Testis (tissue), 5 donors: ENCODE measurements at regions of chr3 and their contacts with region 1.

Region 1: GRCh38 chr3:177197041-177197727 is at the start of gene TBL1XR1:
- DNase-seq: peak; percentile 93
- H3K4me3 ChIP-seq: peak within 1 kb of the TSS; percentile 87 to 91
- H3K27ac ChIP-seq: peak within 1 kb of the TSS; percentile 88 to 98
- H3K4me1 ChIP-seq: peaks cover 23% of the 10 kb centered on the region
- H3K27me3 ChIP-seq: no peaks in the 10 kb centered on the region
- CTCF ChIP-seq: no peak
- POLR2A ChIP-seq: no peak
- total RNA-seq, gene TBL1XR1: 59.8 to 67.6 TPM

Region 2: DNA sequence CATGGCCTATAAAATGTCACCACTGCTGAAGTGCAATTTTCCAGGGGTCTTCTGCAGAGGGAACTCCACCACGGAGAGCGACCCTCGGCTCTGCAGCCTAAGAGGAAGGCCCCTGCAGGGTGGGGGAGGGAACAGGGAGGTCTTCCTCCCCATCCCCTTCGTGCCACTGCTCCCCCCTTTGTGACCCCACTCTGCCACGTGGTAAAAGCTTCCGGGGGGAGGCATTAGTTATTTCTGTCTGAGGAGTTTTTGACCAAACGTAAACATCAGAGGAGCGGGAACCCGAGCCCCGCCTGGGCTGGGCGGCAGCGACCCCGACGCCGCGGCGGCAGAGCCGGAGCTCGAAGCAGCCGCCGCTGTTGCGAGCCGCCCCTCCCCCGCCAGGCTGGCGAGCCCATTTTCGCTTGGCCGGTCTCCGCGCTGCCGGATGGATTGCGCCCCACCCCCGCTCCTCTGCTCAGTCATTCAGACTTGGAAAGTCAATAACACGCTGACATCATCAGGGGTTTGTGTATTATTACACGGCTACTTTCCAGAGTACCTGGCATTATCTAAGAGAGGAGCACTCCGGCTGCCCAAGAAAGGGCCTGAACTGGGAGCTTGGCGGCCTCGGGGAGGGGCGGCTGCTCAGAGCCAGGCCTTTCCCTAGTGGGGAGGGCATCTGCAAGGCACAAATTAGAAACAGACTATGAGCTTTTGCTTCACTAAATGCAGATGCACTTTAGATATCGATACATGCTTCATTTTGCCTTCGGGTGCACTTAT is 162.6 kb after region 1 on chr3:
- intact Hi-C with region 1: loop called (anchors 2 kb)
- DNase-seq: peak; percentile 95
- H3K4me3 ChIP-seq: peak overlapping the region; percentile 45 to 49
- H3K27ac ChIP-seq: peak overlapping the region; percentile 78
- H3K4me1 ChIP-seq: peaks cover 56% of the 10 kb centered on the region
- H3K27me3 ChIP-seq: no peaks in the 10 kb centered on the region
- CTCF ChIP-seq: peak in 2 of 3 experiments; percentile 10 to 22
- POLR2A ChIP-seq: no peak

Region 3: DNA sequence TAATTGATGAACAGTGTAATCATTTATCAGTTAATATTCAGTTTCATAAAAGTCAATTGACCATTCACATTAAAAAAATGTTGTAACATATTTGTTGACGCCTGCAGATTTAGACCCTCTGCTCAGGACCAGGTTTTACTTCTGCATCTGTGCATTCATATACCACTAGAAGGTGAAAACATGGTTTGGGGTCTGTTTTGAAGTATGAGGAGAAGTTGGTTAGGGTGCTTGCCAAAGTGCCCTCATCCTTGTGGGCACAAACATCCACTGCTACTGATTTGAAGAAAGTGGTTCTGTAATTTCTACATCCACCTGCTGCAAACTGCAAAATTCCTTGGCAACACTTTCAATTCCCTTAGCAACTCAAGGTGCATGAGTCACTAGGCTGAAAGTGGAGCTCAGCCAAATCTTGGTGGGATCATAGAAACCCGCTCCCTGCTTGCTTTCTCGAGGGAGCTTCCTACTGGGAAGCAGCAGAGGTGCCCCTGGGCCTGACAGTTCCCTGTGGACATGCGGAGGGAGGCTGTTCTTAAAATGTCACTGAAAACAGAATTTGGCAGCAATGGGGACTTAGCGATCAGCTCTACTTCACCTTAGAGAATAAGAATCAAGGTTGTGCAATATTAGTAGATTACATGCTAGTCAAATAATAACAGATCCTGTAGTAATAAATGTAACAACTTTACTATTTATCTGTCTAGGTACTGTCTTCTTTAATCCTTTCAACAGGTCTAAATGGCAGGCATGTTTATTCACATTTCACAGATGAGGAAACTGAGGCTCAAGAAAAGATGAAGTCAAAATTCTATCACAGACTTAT is 301.1 kb after region 1 on chr3:
- intact Hi-C with region 1: no loop called
- DNase-seq: no peak
- H3K4me3 ChIP-seq: no peak overlapping the region
- H3K27ac ChIP-seq: no peak overlapping the region
- H3K4me1 ChIP-seq: no peaks in the 10 kb centered on the region
- H3K27me3 ChIP-seq: no peaks in the 10 kb centered on the region
- CTCF ChIP-seq: no peak
- POLR2A ChIP-seq: no peak